Sigmoid colon (tissue), 7 donors: ENCODE measurements at regions of chr14 and their contacts with region 1.

Region 1: GRCh38 chr14:49892636-49893308 is at the start of gene ARF6:
- DNase-seq: peak; percentile 99
- H3K4me3 ChIP-seq: peak within 1 kb of the TSS; percentile 60 to 96 (median 88)
- H3K27ac ChIP-seq: peak within 1 kb of the TSS; percentile 91 to 100 (median 99)
- H3K4me1 ChIP-seq: peaks cover 0 to 44% (median 42%) of the 10 kb centered on the region in 4 donors
- H3K27me3 ChIP-seq: no peaks in the 10 kb centered on the region
- CTCF ChIP-seq: no peak
- EP300 ChIP-seq: peak in 1 of 4 donors; percentile 77
- POLR2A ChIP-seq: peak; percentile 94 to 95
- total RNA-seq, gene ARF6: 33.8 to 45.6 (median 39.4) TPM

Region 2: GRCh38 chr14:49867831-49868723 is 24.7 kb before region 1 on chr14:
- intact Hi-C with region 1: loop called (anchors 1 kb)
- DNase-seq: peak; percentile 98
- H3K4me3 ChIP-seq: peak overlapping the region; percentile 50 to 65 (median 60)
- H3K27ac ChIP-seq: peak overlapping the region; percentile 83 to 96 (median 92)
- H3K4me1 ChIP-seq: peaks cover 0 to 33% (median 21%) of the 10 kb centered on the region in 4 donors
- H3K27me3 ChIP-seq: no peaks in the 10 kb centered on the region
- CTCF ChIP-seq: no peak
- EP300 ChIP-seq: peak in 1 of 4 donors; percentile 26
- POLR2A ChIP-seq: peak; percentile 65 to 68

Region 3: GRCh38 chr14:49908432-49908781 is 15.6 kb after region 1 on chr14:
- intact Hi-C with region 1: no loop called
- DNase-seq: no peak
- H3K4me3 ChIP-seq: no peak overlapping the region
- H3K27ac ChIP-seq: peak overlapping the region in 3 of 4 donors; percentile 9 to 39 (median 28)
- H3K4me1 ChIP-seq: no peaks in the 10 kb centered on the region
- H3K27me3 ChIP-seq: no peaks in the 10 kb centered on the region
- CTCF ChIP-seq: no peak
- EP300 ChIP-seq: no peak
- POLR2A ChIP-seq: no peak

Region 4: GRCh38 chr14:50003213-50004031 is 110.7 kb after region 1 on chr14:
- intact Hi-C with region 1: loop called (anchors 2 kb)
- DNase-seq: peak; percentile 86
- H3K4me3 ChIP-seq: peak overlapping the region; percentile 29 to 63 (median 54)
- H3K27ac ChIP-seq: peak overlapping the region; percentile 78 to 86 (median 82)
- H3K4me1 ChIP-seq: peaks cover 0 to 52% (median 46%) of the 10 kb centered on the region in 4 donors
- H3K27me3 ChIP-seq: no peaks in the 10 kb centered on the region
- CTCF ChIP-seq: no peak
- EP300 ChIP-seq: no peak
- POLR2A ChIP-seq: peak in 1 of 2 donors; percentile 31

Region 5: DNA sequence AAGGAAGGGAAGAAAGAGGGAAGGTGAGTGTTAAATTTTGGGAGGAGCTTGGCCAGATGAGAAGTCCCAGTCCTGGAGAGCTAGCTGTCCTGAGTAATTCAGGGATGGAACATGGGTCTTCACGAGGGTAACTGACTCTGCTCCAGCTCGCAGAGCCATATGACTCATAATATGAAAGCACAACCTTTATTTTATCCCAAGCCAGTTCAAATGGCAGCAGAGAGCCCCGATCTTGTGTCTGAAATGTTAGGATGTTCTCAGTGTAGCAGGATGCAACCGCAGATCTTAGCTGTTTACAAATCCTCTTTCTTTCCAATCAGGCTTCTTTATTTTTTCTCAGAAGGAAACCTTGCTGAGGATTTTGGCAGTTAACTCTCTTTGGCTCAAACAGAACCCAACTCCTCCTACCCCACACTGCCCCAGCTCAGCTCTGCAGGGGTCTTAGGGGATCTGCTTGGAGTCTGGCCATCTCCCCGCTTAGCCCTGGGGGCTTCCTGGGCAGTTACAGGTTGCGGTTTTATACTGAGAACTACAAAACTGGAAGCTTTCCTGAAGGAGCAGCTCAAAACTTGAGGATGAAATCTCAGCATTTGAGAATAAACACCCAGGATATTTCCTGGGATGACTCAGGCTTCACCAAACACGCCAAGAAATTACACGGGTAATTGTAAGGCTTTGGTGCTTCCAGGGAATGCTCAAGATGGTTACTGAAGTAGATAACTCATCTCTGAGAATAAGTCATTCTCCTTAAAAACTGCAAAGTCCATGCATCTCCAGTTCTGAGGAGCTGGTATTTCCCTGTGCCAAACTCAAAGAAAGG is 131.1 kb after region 1 on chr14:
- intact Hi-C with region 1: loop called (anchors 5 kb)
- DNase-seq: peak; percentile 82
- H3K4me3 ChIP-seq: peak overlapping the region in 1 of 4 donors; percentile 9
- H3K27ac ChIP-seq: peak overlapping the region; percentile 70 to 81 (median 78)
- H3K4me1 ChIP-seq: peaks cover 0 to 33% (median 20%) of the 10 kb centered on the region in 4 donors
- H3K27me3 ChIP-seq: no peaks in the 10 kb centered on the region
- CTCF ChIP-seq: no peak
- EP300 ChIP-seq: peak in 1 of 4 donors; percentile 52
- POLR2A ChIP-seq: no peak

Region 6: DNA sequence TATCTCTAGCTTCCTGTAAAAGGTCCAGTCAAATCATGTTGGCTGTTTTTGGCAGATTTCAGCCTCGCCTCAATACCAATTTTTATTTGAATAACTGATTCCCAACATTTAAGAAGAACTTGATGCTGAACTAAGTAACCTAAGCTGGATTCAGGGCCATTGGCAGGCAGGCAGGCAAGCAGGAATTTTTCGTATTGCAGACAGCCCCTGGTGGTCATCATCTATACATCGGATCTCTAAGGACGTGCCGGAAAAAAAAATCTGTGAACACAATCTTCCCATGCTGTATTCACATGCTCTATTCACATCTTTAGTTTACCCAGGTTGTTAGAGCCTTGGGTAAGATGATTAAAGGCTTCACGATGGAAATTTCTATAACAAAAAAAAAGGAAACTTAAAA is 216.6 kb after region 1 on chr14:
- intact Hi-C with region 1: loop called (anchors 2 kb)
- DNase-seq: no peak
- H3K4me3 ChIP-seq: no peak overlapping the region
- H3K27ac ChIP-seq: no peak overlapping the region
- H3K4me1 ChIP-seq: peaks cover 0 to 4% (median 4%) of the 10 kb centered on the region in 4 donors
- H3K27me3 ChIP-seq: no peaks in the 10 kb centered on the region
- CTCF ChIP-seq: no peak
- EP300 ChIP-seq: no peak
- POLR2A ChIP-seq: no peak